ENCODE measurements at regions of chr3 and their contacts with region 1.

Region 1: GRCh38 chr3:194315088-194315964 is 35.8 kb downstream of the CPN2 start:
- DNase-seq: peak; percentile 90
- CTCF ChIP-seq: peak; percentile 99

Region 2: DNA sequence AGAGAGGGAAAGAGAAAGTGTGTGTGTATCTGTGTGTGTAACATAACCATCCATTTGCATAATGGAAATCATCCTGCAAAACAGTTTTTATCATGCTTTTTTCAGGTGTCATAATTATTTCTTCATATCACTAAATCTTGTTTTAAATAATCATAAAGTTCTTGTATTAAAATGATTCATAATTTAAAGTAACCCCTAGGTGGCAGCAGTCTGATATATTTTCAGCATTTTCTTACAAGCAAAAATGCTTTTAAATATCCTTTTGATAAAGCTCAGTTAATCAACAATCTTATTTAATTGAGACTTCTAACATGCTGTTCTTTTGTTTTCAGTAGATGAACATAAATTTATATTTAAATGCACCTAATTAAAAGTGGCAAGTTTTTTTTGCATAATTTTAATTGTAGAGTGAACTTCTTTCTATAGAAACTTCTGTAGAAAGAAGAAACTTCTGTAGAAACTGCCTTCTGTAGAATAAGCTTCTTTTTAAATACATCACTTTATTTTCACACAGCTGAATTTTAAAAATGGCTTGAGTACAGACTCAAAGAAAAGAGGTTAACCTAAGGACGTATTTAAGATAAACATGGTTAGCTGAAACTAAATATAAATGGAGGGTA is 649.8 kb before region 1 on chr3:
- in situ Hi-C with region 1: loop called (anchors 25 kb)
- DNase-seq: no peak
- CTCF ChIP-seq: peak; percentile 34

Region 3: GRCh38 chr3:193788189-193788991 is 526.9 kb before region 1 on chr3:
- in situ Hi-C with region 1: loop called (anchors 5 kb)
- DNase-seq: peak; percentile 85
- CTCF ChIP-seq: peak; percentile 83

Region 4: DNA sequence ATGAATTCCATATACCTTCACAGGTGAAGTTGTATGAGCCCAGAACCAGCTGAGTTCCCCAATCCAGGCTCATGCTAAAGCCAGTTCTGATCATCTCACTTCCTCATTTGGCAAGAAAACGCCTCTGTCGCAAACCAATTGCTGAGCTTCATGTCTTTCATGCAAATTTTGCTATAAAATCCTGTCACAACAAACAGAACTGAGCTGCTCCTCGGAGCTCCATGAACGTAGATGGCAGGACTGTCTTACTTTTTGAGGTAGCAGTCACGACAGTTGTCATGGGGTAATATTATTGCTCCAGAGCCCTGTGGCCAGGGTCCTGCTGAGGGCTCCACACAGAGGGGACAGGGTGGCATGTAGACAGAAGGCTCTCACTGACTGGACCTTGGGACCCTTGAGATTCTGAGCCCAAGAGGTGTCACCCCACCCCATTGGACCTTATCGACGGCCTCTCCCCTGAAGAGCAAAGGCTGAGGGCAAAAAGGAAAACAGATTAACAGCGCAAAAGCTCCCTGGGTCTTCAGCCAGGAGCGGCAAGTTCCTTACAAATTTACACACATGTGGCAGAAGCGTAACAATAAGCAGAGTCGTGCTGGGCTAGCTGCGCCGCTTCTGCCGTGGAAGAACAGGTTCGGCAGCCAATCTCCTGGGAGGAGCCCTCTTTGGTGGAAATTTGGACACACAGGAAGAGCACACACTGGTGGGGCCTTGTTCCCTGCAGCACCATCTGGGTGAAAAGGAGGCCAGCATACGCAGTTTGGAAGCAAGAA is 473.1 kb before region 1 on chr3:
- in situ Hi-C with region 1: no loop called
- DNase-seq: peak; percentile 36
- CTCF ChIP-seq: no peak

Region 5: DNA sequence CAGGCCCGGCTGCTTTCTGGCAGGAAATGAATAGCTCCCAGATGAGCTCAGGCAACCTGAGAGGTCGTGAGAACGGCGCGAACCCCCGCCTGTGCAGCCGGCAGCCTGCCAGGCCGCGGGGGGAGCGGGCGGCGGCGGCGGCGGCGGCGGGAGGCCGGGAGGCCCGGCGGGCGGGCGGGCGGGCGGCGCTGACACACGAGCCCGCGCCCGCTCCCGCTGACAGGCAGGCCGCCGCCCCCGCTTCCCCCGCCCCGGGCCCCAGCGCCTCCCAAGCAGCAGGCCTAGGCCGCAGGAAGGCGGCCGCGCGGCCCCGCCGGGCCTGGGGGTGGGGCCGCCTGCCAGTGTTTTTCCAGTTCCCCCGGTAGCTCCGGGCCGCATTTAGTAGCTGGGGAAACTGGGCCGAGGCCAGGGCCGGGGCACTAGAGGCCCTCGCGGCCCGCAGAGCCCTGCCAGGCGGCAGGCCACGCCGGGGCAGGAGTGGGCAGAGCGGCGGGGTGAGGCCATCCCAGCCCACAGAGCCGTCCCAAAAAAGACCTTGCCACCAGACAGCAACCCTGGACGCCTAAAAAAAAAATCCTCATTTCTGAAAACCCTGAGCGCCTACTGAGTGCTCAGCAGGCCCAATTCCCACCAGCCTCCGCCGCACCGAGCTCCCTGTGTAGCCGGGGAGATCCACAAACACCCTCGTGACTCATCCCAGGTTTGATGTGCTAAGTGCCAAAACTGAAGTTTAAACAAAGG is 173.7 kb before region 1 on chr3:
- in situ Hi-C with region 1: loop called (anchors 5 kb)
- DNase-seq: peak; percentile 91
- CTCF ChIP-seq: no peak

Region 6: DNA sequence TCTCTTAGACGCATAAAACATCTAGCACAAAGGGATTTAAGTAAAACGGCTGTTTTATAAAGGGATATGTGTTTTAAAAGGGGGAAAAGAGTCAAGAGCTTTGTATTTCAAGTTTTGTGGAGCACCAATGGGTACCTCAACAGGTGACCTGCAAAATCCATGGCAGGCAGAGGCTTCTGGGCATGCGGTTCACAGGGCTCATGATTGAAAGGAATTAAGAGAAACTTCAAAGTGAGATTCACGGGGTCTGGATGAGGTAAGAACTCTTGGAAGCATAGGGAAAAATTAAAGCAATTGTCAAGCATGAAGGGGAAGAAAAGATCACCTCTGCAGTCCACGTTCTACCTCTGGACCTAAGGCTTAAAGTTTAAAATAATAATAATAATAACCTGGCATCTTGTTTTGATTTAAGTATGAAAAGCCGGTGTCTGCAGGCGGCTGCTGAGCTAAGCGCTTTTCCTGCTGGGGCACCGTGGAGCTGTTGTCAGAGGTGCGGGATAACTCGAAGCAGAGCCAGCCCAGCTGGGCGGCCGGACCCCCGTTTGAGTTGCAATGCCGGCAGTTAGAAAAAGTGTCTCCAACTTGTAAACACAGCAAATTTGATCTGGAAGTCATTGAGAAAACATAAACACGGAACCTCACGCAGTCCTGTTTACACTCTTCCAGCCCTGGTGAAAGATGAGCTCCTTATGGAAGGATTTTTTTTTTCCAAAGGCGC is 138.9 kb before region 1 on chr3:
- in situ Hi-C with region 1: no loop called
- DNase-seq: no peak
- CTCF ChIP-seq: no peak

Measured in GM13977 (cell line).